ENCODE measurements at regions of chr7 and their contacts with region 1.

Region 1: DNA sequence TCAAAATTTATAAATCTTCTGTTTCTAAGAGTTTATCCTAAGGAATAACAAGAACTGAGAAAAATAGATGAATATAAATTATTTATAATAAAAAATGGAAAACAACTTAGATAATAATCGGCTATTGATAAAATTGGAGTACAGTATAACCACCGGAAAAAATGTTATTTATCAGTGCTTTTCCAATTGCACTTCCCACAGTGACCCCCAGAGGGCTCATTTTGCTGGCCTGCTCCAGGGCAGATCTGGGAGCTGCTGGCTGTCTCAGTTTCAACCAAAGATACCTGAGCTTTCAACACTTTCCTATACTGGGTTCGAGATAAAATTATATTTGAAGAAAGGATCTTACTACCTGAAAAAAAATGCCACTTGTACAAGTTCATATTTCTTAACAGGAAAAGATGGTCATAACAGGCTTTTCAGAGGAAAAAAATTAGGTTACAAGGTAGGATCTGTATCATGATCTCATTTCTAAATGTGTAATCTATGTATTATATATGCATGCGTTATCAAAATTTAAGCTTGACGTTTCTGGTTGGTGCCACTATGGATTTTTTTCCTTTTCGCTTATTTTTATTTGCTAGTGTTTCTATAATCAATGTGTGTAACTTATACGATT is 165.7 kb downstream of the NPSR1 start:
- DNase-seq: no peak
- H3K4me3 ChIP-seq: no peak overlapping the region
- CTCF ChIP-seq: peak; percentile 76

Region 2: GRCh38 chr7:34373940-34374339 is 449.8 kb before region 1 on chr7:
- CTCF ChIA-PET with region 1: no interaction called
- POLR2A ChIA-PET with region 1: no interaction called
- DNase-seq: no peak
- H3K4me3 ChIP-seq: no peak overlapping the region
- CTCF ChIP-seq: no peak

Region 3: DNA sequence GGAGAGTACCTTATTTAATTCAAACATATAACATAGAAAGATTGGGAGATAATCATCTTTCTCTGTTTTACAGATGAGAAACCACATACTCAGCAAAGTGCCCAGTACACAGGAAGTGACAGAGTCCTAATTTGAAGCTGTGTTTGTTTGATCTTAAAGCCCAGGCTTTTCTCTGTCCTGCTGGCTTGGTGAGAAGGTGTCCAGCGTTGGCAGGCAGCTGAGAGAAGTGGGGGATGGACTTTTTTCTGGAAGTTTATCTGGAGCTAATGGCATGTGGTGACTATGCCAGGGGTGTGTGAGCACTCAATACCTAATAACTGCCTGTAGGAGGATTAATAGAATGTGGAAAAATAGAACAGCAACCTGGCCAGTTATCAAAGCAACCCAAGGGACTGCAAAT is 104.9 kb before region 1 on chr7:
- CTCF ChIA-PET with region 1: no interaction called
- POLR2A ChIA-PET with region 1: no interaction called
- DNase-seq: no peak
- H3K4me3 ChIP-seq: no peak overlapping the region
- CTCF ChIP-seq: no peak

Region 4: DNA sequence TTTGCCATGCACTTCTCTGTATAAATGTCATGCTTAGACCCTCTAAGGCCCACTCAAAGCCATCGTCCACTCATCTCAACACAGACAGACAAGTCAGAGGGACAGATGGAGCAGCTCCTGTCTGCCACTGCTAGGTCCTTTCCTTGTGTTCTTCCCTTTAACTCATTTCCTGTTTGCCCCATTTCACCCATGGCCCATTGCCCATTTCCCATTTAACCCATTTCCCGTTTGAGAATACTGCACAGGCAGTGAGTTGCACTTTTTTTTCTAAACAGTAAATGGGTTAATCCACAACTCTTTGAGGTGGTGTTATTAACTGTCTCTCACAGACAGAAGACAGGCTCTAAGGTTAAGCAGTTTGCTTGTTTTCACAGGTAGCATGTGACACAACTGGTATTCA is 13.6 kb after region 1 on chr7:
- CTCF ChIA-PET with region 1: interaction called, 20 read pairs
- POLR2A ChIA-PET with region 1: no interaction called
- DNase-seq: no peak
- H3K4me3 ChIP-seq: no peak overlapping the region
- CTCF ChIP-seq: no peak